ENCODE measurements at regions of chr4 and their contacts with region 1.

Region 1: GRCh38 chr4:8391972-8392371 is 48.6 kb downstream of the ACOX3 start:
- DNase-seq: peak in 1 of 5 donors; percentile 49
- H3K4me3 ChIP-seq: no peak overlapping the region
- H3K27ac ChIP-seq: no peak overlapping the region
- H3K4me1 ChIP-seq: peaks cover 7 to 12% (median 7%) of the 10 kb centered on the region in 3 donors
- H3K27me3 ChIP-seq: no peaks in the 10 kb centered on the region
- CTCF ChIP-seq: no peak

Region 2: GRCh38 chr4:8267077-8267476 is 124.9 kb before region 1 on chr4:
- intact Hi-C with region 1: loop called (anchors 10 kb)
- DNase-seq: peak in 2 of 5 donors; percentile 58 to 61
- H3K4me3 ChIP-seq: no peak overlapping the region
- H3K27ac ChIP-seq: no peak overlapping the region
- H3K4me1 ChIP-seq: peaks cover 0 to 3% (median 0%) of the 10 kb centered on the region in 3 donors
- H3K27me3 ChIP-seq: no peaks in the 10 kb centered on the region
- CTCF ChIP-seq: peak; percentile 45

Region 3: GRCh38 chr4:8330821-8331574 is 61.0 kb before region 1 on chr4:
- intact Hi-C with region 1: no loop called
- DNase-seq: peak in 2 of 5 donors; percentile 29 to 86
- H3K4me3 ChIP-seq: no peak overlapping the region
- H3K27ac ChIP-seq: no peak overlapping the region
- H3K4me1 ChIP-seq: peaks cover 0 to 16% (median 14%) of the 10 kb centered on the region in 3 donors
- H3K27me3 ChIP-seq: no peaks in the 10 kb centered on the region
- CTCF ChIP-seq: no peak

Measured in kidney (tissue), 22 donors.